Dorsolateral prefrontal cortex (tissue), 120 donors: ENCODE measurements at regions of chr13 and their contacts with region 1.

Region 1: DNA sequence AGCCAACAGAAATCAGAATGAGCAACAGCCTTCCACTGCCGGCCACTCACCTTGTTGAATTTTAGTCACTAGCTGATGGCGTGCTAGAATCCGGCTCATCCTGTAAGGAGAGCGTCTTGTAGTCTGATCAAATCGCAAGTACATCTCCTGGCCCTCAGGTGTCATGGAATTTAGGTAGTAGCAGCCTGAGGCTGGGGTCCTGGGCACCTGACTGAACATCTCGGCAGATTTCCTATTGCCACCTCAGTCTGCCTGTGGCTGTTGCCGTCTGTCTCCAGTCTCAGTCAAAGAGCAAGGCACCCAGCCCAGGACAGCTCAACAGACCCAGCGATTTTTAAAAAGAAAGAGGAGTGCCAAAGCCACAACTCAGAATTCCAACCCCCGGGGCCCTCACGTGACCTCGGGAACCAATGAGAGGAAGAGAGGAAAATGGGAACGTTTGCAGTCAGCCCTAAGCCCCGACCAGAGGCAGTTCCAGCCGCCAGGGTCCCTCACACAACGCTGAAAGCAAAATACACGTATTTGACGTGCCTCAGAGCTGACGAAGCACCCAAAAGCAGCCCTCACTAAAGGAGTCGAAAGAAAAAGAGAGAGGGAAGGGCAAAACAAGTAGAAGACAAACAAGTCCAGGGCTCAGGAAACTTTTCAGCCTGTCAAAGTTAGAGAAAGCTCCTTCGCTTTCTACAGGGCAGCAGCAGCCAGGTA is at the start of gene STARD13:
- DNase-seq: peak; percentile 54 to 95 (median 92)
- H3K4me3 ChIP-seq: peak within 1 kb of the TSS; percentile 53 to 94 (median 76)
- H3K27ac ChIP-seq: peak within 1 kb of the TSS; percentile 27 to 97 (median 91)
- H3K27me3 ChIP-seq: no peaks in the 10 kb centered on the region
- CTCF ChIP-seq: peak in 51 of 56 donors; percentile 15 to 67 (median 45)
- total RNA-seq, gene STARD13: 42.3 to 91.6 (median 62.0) TPM

Region 2: GRCh38 chr13:33072283-33072682 is 213.3 kb before region 1 on chr13:
- intact Hi-C with region 1: loop called in 1 of 2 experiments (anchors 10 kb)
- DNase-seq: peak in 3 of 10 donors; percentile 49 to 62 (median 57)
- H3K4me3 ChIP-seq: no peak overlapping the region
- H3K27ac ChIP-seq: peak overlapping the region in 48 of 59 donors; percentile 1 to 81 (median 56)
- H3K27me3 ChIP-seq: no peaks in the 10 kb centered on the region
- CTCF ChIP-seq: no peak

Region 3: GRCh38 chr13:33262062-33262497 is 23.5 kb before region 1 on chr13:
- intact Hi-C with region 1: loop called in 1 of 2 experiments (anchors 2 kb)
- DNase-seq: peak in 3 of 10 donors; percentile 33 to 65 (median 50)
- H3K4me3 ChIP-seq: peak overlapping the region in 24 of 59 donors; percentile 0 to 51 (median 26)
- H3K27ac ChIP-seq: peak overlapping the region; percentile 32 to 96 (median 91)
- H3K27me3 ChIP-seq: no peaks in the 10 kb centered on the region
- CTCF ChIP-seq: no peak

Region 4: GRCh38 chr13:33537026-33537425 is 251.5 kb after region 1 on chr13:
- intact Hi-C with region 1: loop called in 1 of 2 experiments (anchors 10 kb)
- DNase-seq: no peak
- H3K4me3 ChIP-seq: peak overlapping the region in 48 of 59 donors; percentile 0 to 55 (median 26)
- H3K27ac ChIP-seq: peak overlapping the region in 58 of 59 donors; percentile 5 to 100 (median 82)
- H3K27me3 ChIP-seq: no peaks in the 10 kb centered on the region
- CTCF ChIP-seq: peak in 1 of 56 donors; percentile 9